ENCODE measurements at regions of chr19 and their contacts with region 1.

Region 1: DNA sequence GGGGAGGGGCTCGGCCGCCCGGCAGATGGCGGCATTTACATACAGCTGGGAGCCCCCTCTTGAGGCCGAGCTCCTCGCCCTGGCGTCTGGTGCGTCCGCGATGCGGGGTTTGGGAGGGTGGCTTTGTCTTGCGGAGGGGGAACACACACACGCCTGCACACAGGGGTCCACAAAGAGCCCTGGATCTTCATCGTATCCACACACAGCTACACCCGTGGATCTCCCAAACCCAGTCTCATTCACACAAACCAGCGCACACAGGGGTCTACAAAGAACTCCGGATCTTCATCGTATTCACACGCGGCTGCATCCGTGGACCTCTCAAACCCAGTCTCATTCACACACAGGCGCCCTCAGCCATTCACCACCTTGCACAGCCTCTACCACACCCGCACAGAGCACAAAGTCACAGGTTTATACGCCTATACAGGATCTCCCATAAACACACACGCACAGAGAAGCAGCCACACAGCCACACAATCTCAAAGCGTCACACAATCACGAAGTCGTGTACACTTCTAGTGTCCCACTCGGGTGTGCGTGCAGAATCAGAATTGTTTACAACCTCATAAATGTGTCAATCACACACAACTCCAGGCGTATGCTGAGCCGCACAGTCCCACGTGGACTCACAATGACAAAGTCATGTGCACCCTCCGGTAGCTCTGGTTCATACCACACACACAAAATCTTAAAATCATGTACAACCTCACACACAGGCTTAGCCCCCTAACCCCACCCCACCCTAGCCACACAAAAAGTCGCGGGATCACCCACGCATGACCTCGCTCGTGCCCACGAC is 550 bp upstream of the DLL3 start:
- DNase-seq: peak in 5 of 35 experiments; percentile 9 to 41 (median 12)
- ATAC-seq: peak; percentile 33 to 55 (median 46)
- H3K4me3 ChIP-seq: peak overlapping the region; percentile 9 to 12
- H3K4me3 Mint-ChIP-seq: peak overlapping the region; percentile 35 to 74 (median 61)
- H3K27ac ChIP-seq: no peak overlapping the region
- H3K27ac Mint-ChIP-seq: no peak overlapping the region
- H3K4me1 ChIP-seq: peaks cover 0 to 28% of the 10 kb centered on the region in 2 experiments
- H3K4me1 Mint-ChIP-seq: peaks cover 20 to 25% (median 22%) of the 10 kb centered on the region in 3 donors
- H3K27me3 ChIP-seq: peaks cover 7 to 69% of the 10 kb centered on the region in 2 experiments
- H3K27me3 Mint-ChIP-seq: peaks cover 30 to 46% of the 10 kb centered on the region in 2 donors

Region 2: DNA sequence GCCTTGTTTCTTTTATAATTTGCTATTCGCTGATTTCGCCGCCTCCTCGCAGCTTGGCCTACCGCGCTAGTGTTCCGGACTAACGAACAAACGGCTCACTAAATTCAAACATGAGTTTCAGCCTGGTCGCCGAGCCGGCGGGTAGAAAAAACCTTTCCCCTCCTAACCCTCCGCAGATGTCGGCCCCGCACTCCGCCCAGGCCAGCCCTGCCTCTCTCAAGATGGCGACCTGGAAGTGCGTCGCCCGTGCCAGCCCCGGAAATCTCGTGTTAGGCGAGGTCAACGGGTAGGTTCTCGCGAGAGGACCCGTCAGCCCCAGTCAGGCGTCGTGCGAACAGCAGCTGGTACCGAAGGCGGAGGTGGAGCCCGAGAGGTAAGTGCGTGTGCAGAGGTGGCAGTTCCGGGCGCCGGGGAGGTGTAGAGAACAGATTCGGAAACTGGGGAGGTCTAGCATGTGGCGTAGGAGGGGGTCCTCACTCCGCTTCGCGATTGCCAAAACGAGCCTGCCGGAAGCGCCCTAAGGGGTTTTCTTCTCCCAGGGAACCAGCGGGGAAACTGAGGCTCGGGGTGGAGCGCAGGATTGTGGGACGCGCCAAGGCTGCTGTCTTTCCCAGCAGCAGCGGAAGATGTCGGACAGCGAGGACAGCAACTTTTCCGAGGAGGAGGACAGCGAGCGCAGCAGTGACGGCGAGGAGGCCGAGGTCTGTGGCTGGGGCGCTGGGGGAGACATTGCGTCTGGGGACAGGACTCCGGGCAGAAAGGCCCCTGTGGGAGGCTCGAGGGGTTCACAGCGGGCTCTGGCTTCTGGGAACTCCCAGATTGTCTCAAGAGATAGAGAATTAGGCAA is 52.7 kb before region 1 on chr19 and contains the start of gene SUPT5H:
- CTCF ChIA-PET with region 1: no interaction called
- POLR2A ChIA-PET with region 1: interaction called in 1 of 2 experiments, 11 read pairs
- DNase-seq: peak; percentile 88 to 100 (median 98)
- ATAC-seq: peak; percentile 96 to 97 (median 97)
- H3K4me3 ChIP-seq: peak within 1 kb of the TSS; percentile 96 to 99
- H3K4me3 Mint-ChIP-seq: peak within 1 kb of the TSS; percentile 94 to 96 (median 96)
- H3K27ac ChIP-seq: peak within 1 kb of the TSS; percentile 91
- H3K27ac Mint-ChIP-seq: peak within 1 kb of the TSS; percentile 94 to 97
- H3K4me1 ChIP-seq: peaks cover 11 to 63% of the 10 kb centered on the region in 2 experiments
- H3K4me1 Mint-ChIP-seq: peaks cover 55 to 58% (median 58%) of the 10 kb centered on the region in 3 donors
- H3K27me3 ChIP-seq: no peaks in the 10 kb centered on the region
- H3K27me3 Mint-ChIP-seq: no peaks in the 10 kb centered on the region
- total RNA-seq, gene SUPT5H: 180 to 301 (median 194) TPM

Measured in T-cell (primary cell).